ENCODE measurements at regions of chr12 and their contacts with region 1.

Region 1: GRCh38 chr12:101338087-101338486 is 58.2 kb downstream of the UTP20 start:
- DNase-seq: no peak
- ATAC-seq: no peak
- H3K4me3 Mint-ChIP-seq: no peak overlapping the region
- H3K27ac Mint-ChIP-seq: no peak overlapping the region
- H3K4me1 Mint-ChIP-seq: no peaks in the 10 kb centered on the region
- H3K27me3 Mint-ChIP-seq: no peaks in the 10 kb centered on the region

Region 2: DNA sequence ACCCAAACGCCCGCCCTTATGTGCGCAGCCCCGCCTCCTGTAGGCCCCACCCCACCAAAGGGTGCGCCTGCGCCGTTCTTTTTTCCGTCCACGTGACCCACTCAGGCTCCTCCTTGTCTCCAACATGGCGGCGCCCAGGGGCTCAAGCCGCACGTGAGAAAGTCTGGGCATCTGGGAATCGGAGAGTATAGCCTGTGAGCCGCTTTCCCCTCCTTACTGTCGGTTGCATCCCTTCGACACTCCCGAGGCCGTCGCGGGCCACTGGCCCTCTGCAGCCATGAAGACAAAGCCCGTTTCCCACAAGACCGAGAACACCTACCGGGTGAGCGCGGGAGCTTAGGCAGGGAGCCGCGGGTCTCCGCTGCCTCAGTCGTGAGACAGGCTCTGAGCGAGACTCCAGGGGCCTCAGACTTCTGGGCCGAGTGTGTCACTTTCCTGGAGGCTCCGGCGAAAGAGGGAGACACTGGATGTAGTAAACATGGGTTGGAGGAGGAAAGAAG is 58.0 kb before region 1 on chr12 and contains the start of gene UTP20:
- CTCF ChIA-PET with region 1: no interaction called
- POLR2A ChIA-PET with region 1: no interaction called
- DNase-seq: peak; percentile 95
- ATAC-seq: peak; percentile 99
- H3K4me3 Mint-ChIP-seq: peak within 1 kb of the TSS; percentile 96
- H3K27ac Mint-ChIP-seq: peak within 1 kb of the TSS; percentile 85
- H3K4me1 Mint-ChIP-seq: peaks cover 9% of the 10 kb centered on the region
- H3K27me3 Mint-ChIP-seq: peaks cover 19% of the 10 kb centered on the region
- total RNA-seq, gene UTP20: 16.2 to 16.5 TPM

Region 3: DNA sequence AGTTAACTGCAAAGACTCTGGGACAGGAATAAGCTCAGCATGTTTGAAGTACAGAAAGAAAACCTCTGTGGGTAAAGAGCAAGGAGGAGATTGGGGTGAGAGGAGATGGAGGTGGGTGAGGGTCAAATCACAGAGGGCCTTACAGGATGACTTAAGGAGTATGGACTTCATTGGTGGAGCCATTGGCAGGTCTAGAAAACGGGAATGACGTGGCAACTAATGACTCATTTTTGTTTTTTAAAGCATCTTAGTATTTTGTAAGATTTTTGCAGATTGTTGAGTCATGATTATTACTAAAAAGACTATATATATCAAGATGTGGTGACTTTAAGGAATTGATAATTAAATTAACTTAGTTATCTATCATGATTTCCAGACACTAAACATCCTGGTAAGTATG is 39.7 kb before region 1 on chr12:
- CTCF ChIA-PET with region 1: no interaction called
- POLR2A ChIA-PET with region 1: no interaction called
- DNase-seq: no peak
- ATAC-seq: no peak
- H3K4me3 Mint-ChIP-seq: no peak overlapping the region
- H3K27ac Mint-ChIP-seq: no peak overlapping the region
- H3K4me1 Mint-ChIP-seq: no peaks in the 10 kb centered on the region
- H3K27me3 Mint-ChIP-seq: no peaks in the 10 kb centered on the region

Region 4: GRCh38 chr12:101323255-101323654 is 14.8 kb before region 1 on chr12:
- CTCF ChIA-PET with region 1: interaction called, 13 read pairs
- POLR2A ChIA-PET with region 1: no interaction called
- DNase-seq: no peak
- ATAC-seq: no peak
- H3K4me3 Mint-ChIP-seq: no peak overlapping the region
- H3K27ac Mint-ChIP-seq: no peak overlapping the region
- H3K4me1 Mint-ChIP-seq: no peaks in the 10 kb centered on the region
- H3K27me3 Mint-ChIP-seq: no peaks in the 10 kb centered on the region

Region 5: DNA sequence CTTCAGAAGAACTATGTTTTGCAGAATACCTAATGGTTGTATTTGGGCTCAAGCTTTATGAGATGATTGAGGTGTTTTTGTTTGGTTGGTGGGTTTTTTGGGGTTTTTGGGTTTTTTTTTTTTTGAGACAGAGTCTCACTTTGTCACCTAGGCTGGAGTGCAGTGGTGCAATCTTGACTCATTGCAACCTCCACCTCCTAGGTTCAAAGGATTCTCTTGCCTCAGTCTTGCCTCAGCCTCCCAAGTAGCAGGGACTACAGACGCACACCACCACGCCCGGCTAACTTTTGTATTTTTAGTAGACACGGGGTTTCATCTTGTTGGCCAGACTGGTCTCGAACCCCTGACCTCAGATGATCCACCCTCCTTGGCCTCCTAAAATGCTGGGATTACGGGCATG is 29.9 kb after region 1 on chr12:
- CTCF ChIA-PET with region 1: no interaction called
- POLR2A ChIA-PET with region 1: no interaction called
- DNase-seq: no peak
- ATAC-seq: no peak
- H3K4me3 Mint-ChIP-seq: no peak overlapping the region
- H3K27ac Mint-ChIP-seq: no peak overlapping the region
- H3K4me1 Mint-ChIP-seq: no peaks in the 10 kb centered on the region
- H3K27me3 Mint-ChIP-seq: no peaks in the 10 kb centered on the region

Region 6: DNA sequence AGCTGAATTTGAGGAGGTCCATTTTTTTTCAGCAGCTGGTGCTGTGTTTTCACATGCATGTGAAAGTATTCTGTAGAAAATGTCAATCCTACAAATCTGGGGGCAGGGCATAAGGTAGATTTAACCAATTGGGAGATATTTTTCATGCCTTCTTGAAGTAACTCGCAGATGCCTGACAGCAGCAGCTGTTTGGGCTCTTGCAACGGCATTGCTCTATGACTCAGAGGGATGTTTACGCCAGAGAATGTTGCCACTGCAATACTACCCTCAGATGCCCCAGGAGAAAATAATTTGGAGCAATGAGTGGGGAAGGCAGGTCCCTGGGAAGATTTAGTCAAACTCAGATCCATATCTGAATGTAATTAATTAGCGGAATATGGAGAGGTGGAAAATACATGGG is 214.2 kb after region 1 on chr12:
- CTCF ChIA-PET with region 1: no interaction called
- POLR2A ChIA-PET with region 1: no interaction called
- DNase-seq: no peak
- ATAC-seq: no peak
- H3K4me3 Mint-ChIP-seq: no peak overlapping the region
- H3K27ac Mint-ChIP-seq: no peak overlapping the region
- H3K4me1 Mint-ChIP-seq: no peaks in the 10 kb centered on the region
- H3K27me3 Mint-ChIP-seq: peaks cover 2% of the 10 kb centered on the region

Measured in activated CD8-positive, alpha-beta T cell treated with anti-CD3 and anti-CD28 coated beads, Interleukin-2, amount 10 ng/mL, durations not matched to agents 7 days and 5 days (primary cell).